CD4-positive, alpha-beta memory T cell (primary cell): ENCODE measurements at regions of chr1 and their contacts with region 1.

Region 1: DNA sequence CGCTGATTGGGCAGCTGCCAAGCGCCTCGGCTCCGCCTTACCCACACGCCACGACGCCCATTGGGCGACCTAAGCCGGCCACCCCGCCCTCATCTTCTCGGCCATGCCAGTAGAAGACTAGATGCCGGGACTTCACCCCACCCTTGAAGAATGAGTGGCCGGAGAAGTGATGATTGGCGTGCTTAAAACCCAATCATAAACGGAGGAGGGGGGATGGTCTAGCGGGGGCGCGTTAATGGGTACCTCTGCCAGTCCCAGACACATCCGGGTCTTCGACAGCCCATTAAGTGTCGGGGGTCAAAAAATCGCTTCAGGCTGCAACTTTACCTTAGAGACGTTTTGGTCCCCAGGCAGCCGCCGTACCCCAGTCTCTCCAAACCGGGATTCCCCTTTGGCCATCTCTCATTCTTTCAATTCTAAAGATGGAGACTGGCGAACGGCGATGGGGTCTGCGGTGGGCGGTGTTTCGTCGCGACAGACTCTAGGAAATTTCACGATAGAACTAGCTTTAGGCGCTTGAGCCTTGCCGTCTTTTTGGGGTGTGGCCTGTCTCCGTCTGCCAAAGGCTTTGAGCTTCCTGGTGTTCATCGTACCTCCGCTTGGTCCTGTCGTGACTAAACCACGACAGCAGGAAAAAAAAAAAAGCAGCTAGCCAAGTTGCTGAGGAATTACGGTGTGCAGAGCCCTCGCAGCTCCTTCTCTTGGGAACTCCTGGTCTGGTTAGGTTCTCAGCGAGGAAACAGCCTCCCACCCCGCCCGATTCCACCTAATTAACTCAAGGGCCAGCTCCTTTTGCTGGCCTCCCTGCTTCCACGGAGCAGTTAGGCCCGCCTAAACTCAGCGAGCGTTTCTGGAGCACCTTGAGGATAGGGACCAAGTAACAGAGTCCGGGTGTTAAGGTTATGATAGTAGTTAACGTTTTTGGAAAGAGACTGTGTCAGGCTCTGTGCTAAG is at the start of gene GATAD2B:
- DNase-seq: peak; percentile 99 to 100 (median 100)
- H3K4me3 ChIP-seq: peak within 1 kb of the TSS; percentile 80 to 99
- H3K4me3 Mint-ChIP-seq: peak within 1 kb of the TSS; percentile 94 to 97 (median 95)
- H3K27ac ChIP-seq: peak within 1 kb of the TSS; percentile 97
- H3K27ac Mint-ChIP-seq: peak within 1 kb of the TSS; percentile 96 to 99 (median 97)
- H3K4me1 ChIP-seq: peaks cover 44% of the 10 kb centered on the region
- H3K4me1 Mint-ChIP-seq: peaks cover 34 to 55% (median 43%) of the 10 kb centered on the region in 4 donors
- H3K27me3 ChIP-seq: no peaks in the 10 kb centered on the region
- H3K27me3 Mint-ChIP-seq: no peaks in the 10 kb centered on the region
- total RNA-seq, gene GATAD2B: 97.0 to 104 TPM

Region 2: DNA sequence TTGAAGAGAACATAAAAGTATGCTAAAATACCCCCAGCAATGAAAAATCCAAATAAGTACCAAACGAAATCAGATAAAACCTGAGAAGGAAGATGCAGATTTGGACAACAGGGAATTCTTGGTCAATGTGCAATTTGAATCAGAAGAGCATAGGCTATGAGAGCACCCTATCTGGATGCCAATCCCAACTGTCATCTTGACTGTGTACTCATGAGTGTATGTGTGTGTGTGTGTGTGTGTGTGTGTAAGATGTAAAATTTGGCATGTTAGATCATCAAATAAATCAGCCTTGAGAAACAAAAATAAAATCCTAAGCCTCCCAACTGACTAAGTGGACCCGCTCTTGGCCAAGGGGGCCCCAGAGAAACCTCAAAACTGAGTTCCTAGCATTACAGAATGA is 754.6 kb before region 1 on chr1:
- CTCF ChIA-PET with region 1: no interaction called
- POLR2A ChIA-PET with region 1: no interaction called
- intact Hi-C with region 1: no loop called
- DNase-seq: no peak
- H3K4me3 ChIP-seq: no peak overlapping the region
- H3K4me3 Mint-ChIP-seq: no peak overlapping the region
- H3K27ac ChIP-seq: no peak overlapping the region
- H3K27ac Mint-ChIP-seq: no peak overlapping the region
- H3K4me1 ChIP-seq: no peaks in the 10 kb centered on the region
- H3K4me1 Mint-ChIP-seq: no peaks in the 10 kb centered on the region
- H3K27me3 ChIP-seq: no peaks in the 10 kb centered on the region
- H3K27me3 Mint-ChIP-seq: peaks cover 15 to 24% of the 10 kb centered on the region in 2 donors

Region 3: DNA sequence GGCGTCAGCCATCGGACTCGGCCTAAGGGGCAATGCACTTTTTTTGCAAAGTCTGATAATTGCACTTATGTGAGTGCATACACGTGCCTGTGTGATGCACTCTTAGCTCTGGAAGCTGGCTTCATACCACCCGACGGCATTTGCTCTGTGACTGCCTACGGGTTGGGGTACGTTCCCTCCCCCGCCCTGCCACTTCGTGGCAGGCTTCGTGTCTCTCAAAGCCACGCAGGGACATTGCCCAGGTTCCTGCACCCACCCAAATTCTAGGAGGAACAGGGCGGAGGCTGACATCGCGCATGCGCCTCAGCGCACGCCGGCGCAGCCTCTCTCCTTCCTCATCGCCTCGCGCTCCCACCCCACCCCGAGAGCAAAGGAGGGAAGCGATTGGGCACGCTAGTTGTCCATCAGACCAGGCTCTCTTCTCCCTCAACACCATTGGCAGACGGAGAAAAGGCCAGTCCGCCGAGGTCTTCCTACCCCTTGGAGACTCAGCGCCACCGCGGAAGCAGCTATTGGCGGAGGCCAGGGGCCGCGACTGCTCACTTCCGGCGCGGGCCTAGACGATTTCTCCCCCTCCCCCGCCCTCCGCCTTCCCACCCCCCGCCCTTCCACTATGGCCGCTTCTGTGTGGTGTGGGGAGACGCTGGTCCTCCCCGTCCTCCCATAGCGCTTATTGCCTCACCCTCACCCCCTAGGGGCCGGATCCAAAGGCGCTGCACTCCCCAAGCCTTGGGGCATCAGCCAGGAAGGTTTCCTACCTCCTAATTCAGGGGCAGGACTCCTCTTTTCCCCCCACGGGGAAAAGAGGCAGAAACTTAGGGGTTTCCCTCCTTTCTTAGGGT is 195.6 kb before region 1 on chr1 and contains the start of gene INTS3:
- CTCF ChIA-PET with region 1: no interaction called
- POLR2A ChIA-PET with region 1: interaction called, 4 read pairs
- intact Hi-C with region 1: loop called (anchors 2 kb)
- DNase-seq: peak; percentile 98 to 100 (median 99)
- H3K4me3 ChIP-seq: peak within 1 kb of the TSS; percentile 79 to 98
- H3K4me3 Mint-ChIP-seq: peak within 1 kb of the TSS; percentile 88 to 96 (median 93)
- H3K27ac ChIP-seq: peak within 1 kb of the TSS; percentile 93
- H3K27ac Mint-ChIP-seq: peak within 1 kb of the TSS; percentile 93 to 99 (median 97)
- H3K4me1 ChIP-seq: peaks cover 32% of the 10 kb centered on the region
- H3K4me1 Mint-ChIP-seq: peaks cover 19 to 36% (median 29%) of the 10 kb centered on the region in 4 donors
- H3K27me3 ChIP-seq: no peaks in the 10 kb centered on the region
- H3K27me3 Mint-ChIP-seq: no peaks in the 10 kb centered on the region
- total RNA-seq, gene INTS3: 49.1 to 53.0 TPM

Region 4: GRCh38 chr1:153783233-153784190 is 139.7 kb before region 1 on chr1:
- CTCF ChIA-PET with region 1: no interaction called
- POLR2A ChIA-PET with region 1: interaction called, 8 read pairs
- intact Hi-C with region 1: loop called (anchors 1 kb)
- DNase-seq: peak; percentile 89 to 94 (median 92)
- H3K4me3 ChIP-seq: peak overlapping the region; percentile 55 to 73
- H3K4me3 Mint-ChIP-seq: peak overlapping the region; percentile 88 to 97 (median 92)
- H3K27ac ChIP-seq: peak overlapping the region; percentile 84
- H3K27ac Mint-ChIP-seq: peak overlapping the region; percentile 89 to 99 (median 98)
- H3K4me1 ChIP-seq: peaks cover 6% of the 10 kb centered on the region
- H3K4me1 Mint-ChIP-seq: peaks cover 4 to 12% (median 11%) of the 10 kb centered on the region in 4 donors
- H3K27me3 ChIP-seq: no peaks in the 10 kb centered on the region
- H3K27me3 Mint-ChIP-seq: peaks cover 0 to 2% of the 10 kb centered on the region in 2 donors

Region 5: DNA sequence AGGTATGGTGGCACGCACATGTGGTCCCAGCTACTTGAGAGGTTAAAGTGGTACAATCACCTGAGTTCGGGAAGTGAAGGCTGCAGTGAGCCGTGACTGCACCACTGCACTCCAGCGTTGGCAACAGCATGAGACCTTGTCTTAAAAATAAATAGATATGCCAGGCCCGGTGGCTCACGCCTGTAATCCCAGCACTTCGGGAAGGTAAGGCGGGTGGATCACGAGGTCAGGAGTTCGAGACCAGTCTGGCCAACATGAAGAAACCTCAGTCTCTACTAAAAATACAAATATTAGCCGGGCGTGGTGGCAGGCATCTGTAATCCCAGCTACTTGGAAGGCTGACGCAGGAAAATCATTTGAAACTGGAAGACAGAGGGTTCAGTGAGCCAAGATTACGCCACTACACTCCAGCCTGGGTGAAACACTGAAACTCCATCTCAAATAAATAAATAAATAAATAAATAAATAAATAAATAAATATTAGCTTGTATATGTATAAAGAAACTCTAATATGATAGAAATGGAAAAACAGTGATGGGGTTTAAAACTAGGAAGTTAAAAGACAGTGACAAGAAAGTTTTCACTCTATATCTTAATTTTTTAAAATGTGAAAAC is 19.3 kb before region 1 on chr1:
- CTCF ChIA-PET with region 1: no interaction called
- POLR2A ChIA-PET with region 1: no interaction called
- intact Hi-C with region 1: no loop called
- DNase-seq: no peak
- H3K4me3 ChIP-seq: no peak overlapping the region
- H3K4me3 Mint-ChIP-seq: no peak overlapping the region
- H3K27ac ChIP-seq: no peak overlapping the region
- H3K27ac Mint-ChIP-seq: peak overlapping the region in 3 of 7 donors; percentile 8 to 52 (median 22)
- H3K4me1 ChIP-seq: no peaks in the 10 kb centered on the region
- H3K4me1 Mint-ChIP-seq: peaks cover 13 to 47% (median 30%) of the 10 kb centered on the region in 4 donors
- H3K27me3 ChIP-seq: no peaks in the 10 kb centered on the region
- H3K27me3 Mint-ChIP-seq: no peaks in the 10 kb centered on the region

Region 6: DNA sequence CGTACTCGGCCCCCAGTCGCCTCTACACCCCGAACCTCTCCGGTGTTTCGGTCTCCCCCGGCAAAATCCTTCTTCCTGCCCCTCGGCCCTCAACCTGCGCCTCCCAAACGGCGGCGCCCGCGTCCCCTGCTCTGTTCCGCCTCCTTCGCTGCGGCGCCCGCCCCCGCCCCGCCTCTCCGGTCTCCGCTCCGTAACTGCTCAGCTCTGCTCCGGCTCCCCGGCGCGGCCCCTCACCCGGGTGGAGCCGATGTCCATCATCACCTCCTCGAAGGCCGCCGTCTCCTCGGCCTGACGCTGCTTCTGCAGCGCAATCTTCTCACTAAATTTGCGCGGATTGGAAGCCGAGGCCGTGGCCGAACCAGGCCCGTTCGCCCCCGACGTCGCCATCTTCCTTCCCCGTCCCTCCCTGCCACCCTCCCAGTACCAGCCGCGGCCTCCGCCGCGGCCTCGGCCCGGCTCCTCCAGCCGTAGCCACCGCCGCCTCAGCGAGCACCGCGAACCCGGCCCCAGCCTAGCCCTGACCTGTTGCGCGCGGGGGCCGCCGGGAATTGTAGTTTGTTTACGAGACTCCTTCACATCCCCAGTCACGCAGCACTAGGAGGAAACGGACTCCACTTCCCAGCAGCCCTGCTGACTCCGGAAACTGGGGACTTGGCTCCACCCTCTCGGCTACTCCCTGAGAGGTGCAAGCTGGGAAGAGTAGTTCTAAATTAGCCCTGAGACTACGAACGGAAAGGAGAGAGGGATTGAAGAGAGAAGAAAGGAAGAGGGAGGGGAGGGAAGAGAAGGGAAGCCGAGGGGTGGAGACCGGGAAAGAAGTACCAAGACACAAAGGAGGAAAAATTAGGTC is 35.1 kb after region 1 on chr1 and contains the start of gene CRTC2:
- CTCF ChIA-PET with region 1: interaction called, 5 read pairs
- POLR2A ChIA-PET with region 1: interaction called, 22 read pairs
- intact Hi-C with region 1: loop called (anchors 1 kb)
- DNase-seq: peak; percentile 95 to 99 (median 97)
- H3K4me3 ChIP-seq: peak within 1 kb of the TSS; percentile 80 to 99
- H3K4me3 Mint-ChIP-seq: peak within 1 kb of the TSS; percentile 97 to 99 (median 99)
- H3K27ac ChIP-seq: peak within 1 kb of the TSS; percentile 90
- H3K27ac Mint-ChIP-seq: peak within 1 kb of the TSS; percentile 88 to 99 (median 97)
- H3K4me1 ChIP-seq: peaks cover 61% of the 10 kb centered on the region
- H3K4me1 Mint-ChIP-seq: peaks cover 42 to 75% (median 57%) of the 10 kb centered on the region in 4 donors
- H3K27me3 ChIP-seq: no peaks in the 10 kb centered on the region
- H3K27me3 Mint-ChIP-seq: no peaks in the 10 kb centered on the region
- total RNA-seq, gene CRTC2: 112 to 113 TPM

Region 7: DNA sequence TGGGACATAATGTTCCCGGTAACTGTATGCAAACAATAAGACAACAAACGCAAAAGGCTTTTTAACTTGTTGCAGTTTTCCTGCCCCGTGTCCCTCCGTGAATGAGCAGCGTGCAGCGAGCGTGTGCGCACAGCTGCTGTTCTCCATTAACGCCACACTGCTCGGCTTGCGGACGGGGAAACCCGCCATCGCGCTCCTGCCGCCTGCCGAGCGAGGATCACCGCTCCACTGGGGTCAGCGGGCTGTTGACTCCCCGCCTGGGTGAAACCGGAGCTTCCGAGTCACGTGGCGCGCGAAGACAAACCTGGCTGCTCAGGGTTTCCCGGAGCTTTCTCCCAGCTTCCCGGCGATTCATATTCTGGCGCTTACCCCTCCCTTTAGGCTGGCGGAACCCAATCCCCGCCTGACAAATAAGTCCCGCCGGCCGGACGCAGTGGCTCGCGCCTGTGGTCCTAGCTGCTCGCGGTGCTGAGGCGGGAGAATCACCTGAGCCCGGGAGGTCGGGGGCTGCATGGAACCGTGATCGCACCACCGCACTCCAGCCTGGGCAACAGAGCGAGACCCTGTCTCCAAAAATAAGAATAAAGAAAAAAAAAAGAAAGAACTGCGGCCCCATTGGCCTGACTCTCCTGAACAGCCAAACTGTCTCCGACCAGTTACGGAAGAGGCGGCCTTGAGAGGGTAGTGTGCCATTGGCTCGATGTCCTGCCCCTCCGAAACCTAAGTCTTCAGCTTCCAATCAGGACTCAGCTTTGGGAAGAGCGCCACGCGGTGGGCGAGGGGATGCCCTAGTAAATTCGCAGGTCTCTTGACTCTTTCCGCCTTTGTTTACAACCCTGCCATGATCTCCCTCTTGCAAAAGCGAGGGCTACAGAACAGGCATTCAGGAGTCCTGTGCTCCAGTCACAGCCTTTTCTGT is 44.1 kb after region 1 on chr1 and contains the start of gene CREB3L4:
- CTCF ChIA-PET with region 1: interaction called, 5 read pairs
- POLR2A ChIA-PET with region 1: interaction called, 56 read pairs
- intact Hi-C with region 1: loop called (anchors 1 kb)
- DNase-seq: peak; percentile 82 to 91 (median 87)
- H3K4me3 ChIP-seq: peak within 1 kb of the TSS; percentile 45 to 66
- H3K4me3 Mint-ChIP-seq: peak within 1 kb of the TSS; percentile 86 to 97 (median 92)
- H3K27ac ChIP-seq: peak within 1 kb of the TSS; percentile 89
- H3K27ac Mint-ChIP-seq: peak within 1 kb of the TSS; percentile 95 to 99 (median 96)
- H3K4me1 ChIP-seq: peaks cover 46% of the 10 kb centered on the region
- H3K4me1 Mint-ChIP-seq: peaks cover 29 to 60% (median 47%) of the 10 kb centered on the region in 4 donors
- H3K27me3 ChIP-seq: no peaks in the 10 kb centered on the region
- H3K27me3 Mint-ChIP-seq: no peaks in the 10 kb centered on the region
- total RNA-seq, gene CREB3L4: 7.4 to 9.8 TPM

Region 8: GRCh38 chr1:153977250-153978240 is 54.3 kb after region 1 on chr1 and contains the start of gene JTB:
- CTCF ChIA-PET with region 1: interaction called, 7 read pairs
- POLR2A ChIA-PET with region 1: interaction called, 30 read pairs
- intact Hi-C with region 1: loop called (anchors 1 kb)
- DNase-seq: peak; percentile 77 to 91 (median 79)
- H3K4me3 ChIP-seq: peak within 1 kb of the TSS; percentile 94
- H3K4me3 Mint-ChIP-seq: peak within 1 kb of the TSS; percentile 93 to 98 (median 97)
- H3K27ac ChIP-seq: peak within 1 kb of the TSS; percentile 92
- H3K27ac Mint-ChIP-seq: peak within 1 kb of the TSS; percentile 96 to 98 (median 97)
- H3K4me1 ChIP-seq: peaks cover 25% of the 10 kb centered on the region
- H3K4me1 Mint-ChIP-seq: peaks cover 15 to 54% (median 29%) of the 10 kb centered on the region in 4 donors
- H3K27me3 ChIP-seq: no peaks in the 10 kb centered on the region
- H3K27me3 Mint-ChIP-seq: no peaks in the 10 kb centered on the region
- total RNA-seq, gene JTB: 121 to 130 TPM

Region 9: DNA sequence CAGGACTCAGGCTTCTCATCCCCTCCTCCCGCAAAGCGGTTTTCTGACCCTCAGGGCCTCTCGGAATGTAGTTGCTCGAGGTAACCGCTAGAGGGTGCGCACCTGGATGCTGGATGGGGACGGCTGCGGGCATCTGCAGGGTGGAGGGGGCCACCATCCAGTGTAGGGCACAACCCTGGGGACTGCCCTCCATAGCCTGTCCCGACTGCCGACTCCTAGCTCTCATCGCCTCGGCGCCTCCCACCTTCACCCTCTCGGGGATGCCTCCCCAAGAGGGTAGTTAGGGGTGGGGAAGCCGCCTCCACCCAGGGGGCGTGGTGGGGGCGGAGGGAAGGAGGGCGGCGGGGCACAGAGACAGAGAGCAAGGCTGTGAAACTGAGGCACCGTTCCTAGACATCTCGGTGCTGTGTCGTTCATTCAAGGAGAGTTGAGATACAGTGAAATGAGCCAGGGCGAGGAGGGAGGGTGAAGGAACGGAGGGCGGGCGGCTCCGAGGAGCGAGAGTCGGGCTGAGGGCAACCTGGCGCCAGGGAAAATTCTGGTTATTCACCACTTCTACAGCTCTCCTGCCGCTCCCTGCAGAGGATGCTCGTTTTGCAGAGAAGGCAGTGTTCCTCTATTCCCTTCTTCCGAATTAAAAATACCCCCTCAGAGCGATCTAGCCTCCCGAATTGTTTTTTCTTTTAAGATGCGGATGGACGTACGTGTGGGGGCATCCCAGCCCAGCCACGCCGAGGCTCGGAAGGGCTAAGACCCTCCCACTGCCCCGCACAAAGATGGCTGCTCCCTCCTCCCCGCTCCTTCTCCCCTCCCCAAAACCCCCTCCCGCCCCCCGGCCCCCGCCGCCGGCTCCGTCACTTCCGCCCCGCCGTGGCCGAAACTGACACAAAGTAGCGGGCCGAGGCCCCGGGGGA is 401.7 kb after region 1 on chr1 and contains the start of gene ATP8B2:
- CTCF ChIA-PET with region 1: no interaction called
- POLR2A ChIA-PET with region 1: no interaction called
- intact Hi-C with region 1: loop called (anchors 5 kb)
- DNase-seq: peak; percentile 79 to 85 (median 81)
- H3K4me3 ChIP-seq: peak within 1 kb of the TSS; percentile 61 to 66
- H3K4me3 Mint-ChIP-seq: peak within 1 kb of the TSS; percentile 93 to 99 (median 98)
- H3K27ac ChIP-seq: peak within 1 kb of the TSS; percentile 89
- H3K27ac Mint-ChIP-seq: peak within 1 kb of the TSS; percentile 86 to 98 (median 96)
- H3K4me1 ChIP-seq: peaks cover 41% of the 10 kb centered on the region
- H3K4me1 Mint-ChIP-seq: peaks cover 22 to 49% (median 32%) of the 10 kb centered on the region in 4 donors
- H3K27me3 ChIP-seq: no peaks in the 10 kb centered on the region
- H3K27me3 Mint-ChIP-seq: no peaks in the 10 kb centered on the region
- total RNA-seq, gene ATP8B2: 186 TPM